Mucosa of descending colon (tissue), 3 donors: ENCODE measurements at regions of chr10 and their contacts with region 1.

Region 1: DNA sequence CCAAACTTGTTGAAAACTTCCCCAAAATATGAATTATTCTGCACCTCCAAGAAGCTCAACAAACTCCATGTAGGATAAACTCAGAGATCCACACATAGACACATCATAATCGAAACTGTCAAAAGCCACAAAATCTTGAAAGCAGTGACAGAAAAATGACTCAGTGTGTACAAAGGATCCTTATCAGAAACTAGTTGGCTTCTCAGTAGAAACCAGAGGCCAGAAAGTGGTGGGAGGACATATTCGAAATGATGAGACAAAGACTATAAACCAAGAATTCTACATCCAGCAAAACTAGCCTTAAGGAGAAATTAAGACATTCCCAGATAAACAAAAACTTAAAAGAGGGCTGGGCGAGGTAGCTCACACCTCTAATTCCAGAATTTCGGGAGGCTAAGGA is 38.5 kb downstream of the MCMBP start:
- DNase-seq: no peak
- ATAC-seq: no peak
- H3K4me3 ChIP-seq: no peak overlapping the region
- H3K4me1 ChIP-seq: no peaks in the 10 kb centered on the region
- CTCF ChIP-seq: no peak

Region 2: GRCh38 chr10:119750391-119751230 is 83.6 kb before region 1 on chr10:
- intact Hi-C with region 1: loop called in 1 of 2 experiments (anchors 10 kb)
- DNase-seq: peak in 2 of 3 donors; percentile 40 to 75
- ATAC-seq: peak; percentile 97
- H3K4me3 ChIP-seq: no peak overlapping the region
- H3K4me1 ChIP-seq: no peaks in the 10 kb centered on the region
- CTCF ChIP-seq: peak; percentile 61